ENCODE measurements at regions of chr12 and their contacts with region 1.

Region 1: GRCh38 chr12:52156736-52157565 is 34.9 kb downstream of the KRT80 start:
- DNase-seq: peak; percentile 78
- CTCF ChIP-seq: peak; percentile 99

Region 2: GRCh38 chr12:52879394-52880351 is 722.7 kb after region 1 on chr12:
- in situ Hi-C with region 1: loop called (anchors 10 kb)
- DNase-seq: peak; percentile 74
- CTCF ChIP-seq: peak; percentile 78

Measured in GM13977 (cell line).